ENCODE measurements at regions of chr14 and their contacts with region 1.

Region 1: GRCh38 chr14:60331201-60332045 is 82.4 kb downstream of the PPM1A start:
- DNase-seq: peak; percentile 92
- H3K4me3 Mint-ChIP-seq: peak overlapping the region; percentile 97
- H3K27ac Mint-ChIP-seq: peak overlapping the region; percentile 95
- H3K4me1 Mint-ChIP-seq: peaks cover 32% of the 10 kb centered on the region
- H3K27me3 Mint-ChIP-seq: peaks cover 42% of the 10 kb centered on the region

Region 2: DNA sequence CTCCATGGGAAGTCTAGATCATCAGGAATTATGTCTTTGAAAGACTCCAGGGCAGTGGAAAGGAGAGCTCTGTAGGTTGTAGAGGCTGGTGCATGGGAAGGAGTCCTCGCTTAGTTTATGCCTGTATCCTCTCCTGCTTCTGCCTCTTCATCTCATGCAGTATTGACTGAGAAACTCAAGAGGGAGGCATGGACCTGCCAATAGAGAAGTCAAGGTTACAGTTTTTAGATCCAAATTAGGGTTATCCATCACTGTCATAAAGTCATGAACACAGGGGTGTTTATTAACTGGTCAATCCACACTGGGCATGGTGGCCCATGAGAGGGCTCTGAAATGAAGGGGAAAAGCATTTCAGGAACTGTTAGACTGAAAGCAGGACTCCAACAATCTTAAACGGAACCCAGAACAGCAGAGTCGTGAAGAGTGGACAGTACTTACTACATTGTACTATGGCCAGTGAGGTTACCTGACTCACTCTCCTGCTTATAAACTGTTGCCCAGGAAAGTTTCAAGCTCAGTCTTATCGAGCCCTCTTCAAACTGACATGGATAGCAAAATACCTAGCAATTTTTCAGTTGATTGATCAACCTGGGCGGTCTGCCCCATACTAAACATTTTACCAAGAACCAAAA is 136.1 kb before region 1 on chr14:
- intact Hi-C with region 1: loop called (anchors 10 kb)
- DNase-seq: no peak
- H3K4me3 Mint-ChIP-seq: no peak overlapping the region
- H3K27ac Mint-ChIP-seq: no peak overlapping the region
- H3K4me1 Mint-ChIP-seq: peaks cover 6% of the 10 kb centered on the region
- H3K27me3 Mint-ChIP-seq: peaks cover 9% of the 10 kb centered on the region

Region 3: GRCh38 chr14:60311417-60311816 is 20.0 kb before region 1 on chr14:
- intact Hi-C with region 1: no loop called
- DNase-seq: no peak
- H3K4me3 Mint-ChIP-seq: no peak overlapping the region
- H3K27ac Mint-ChIP-seq: no peak overlapping the region
- H3K4me1 Mint-ChIP-seq: no peaks in the 10 kb centered on the region
- H3K27me3 Mint-ChIP-seq: peaks cover 21% of the 10 kb centered on the region

Region 4: DNA sequence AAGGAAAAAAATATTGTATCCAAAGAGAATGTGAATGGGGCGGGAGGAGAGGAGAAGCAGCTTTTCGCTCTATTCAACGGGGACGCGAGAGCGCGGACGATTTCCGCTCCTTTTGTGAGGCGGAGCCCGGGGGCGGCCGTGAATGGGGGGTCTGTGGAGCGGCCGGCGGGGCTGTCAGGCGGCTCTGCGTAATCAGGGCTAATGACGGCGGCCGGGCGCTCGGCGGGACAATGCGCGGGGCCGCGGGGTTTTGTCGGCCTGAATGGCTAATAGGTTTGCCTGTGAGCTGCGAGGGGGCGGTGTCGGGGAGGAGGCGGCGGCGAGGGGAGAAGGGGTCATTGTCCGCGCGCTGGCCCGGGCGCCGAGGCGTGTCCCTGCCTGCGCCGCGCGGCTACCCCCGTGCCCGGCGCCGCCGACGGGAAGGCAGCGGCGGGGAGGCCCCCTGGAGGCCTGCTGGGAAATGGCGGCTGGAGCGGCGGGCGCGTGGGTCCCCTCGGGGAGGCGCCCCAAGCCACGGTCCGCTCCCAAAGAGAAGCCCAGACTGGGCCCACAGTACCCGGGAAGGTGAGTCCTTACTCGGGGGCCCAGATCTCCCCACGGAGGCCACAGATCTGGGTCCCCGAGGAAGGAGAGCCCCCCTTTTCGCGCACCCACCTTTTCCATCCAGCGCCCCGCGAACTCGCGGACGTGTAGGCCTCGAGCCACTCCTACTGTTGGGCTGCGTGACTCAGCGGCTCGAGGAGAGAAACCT is 183.5 kb after region 1 on chr14:
- intact Hi-C with region 1: no loop called
- DNase-seq: peak; percentile 68
- H3K4me3 Mint-ChIP-seq: peak overlapping the region; percentile 52
- H3K27ac Mint-ChIP-seq: no peak overlapping the region
- H3K4me1 Mint-ChIP-seq: no peaks in the 10 kb centered on the region
- H3K27me3 Mint-ChIP-seq: peaks cover 58% of the 10 kb centered on the region

Region 5: DNA sequence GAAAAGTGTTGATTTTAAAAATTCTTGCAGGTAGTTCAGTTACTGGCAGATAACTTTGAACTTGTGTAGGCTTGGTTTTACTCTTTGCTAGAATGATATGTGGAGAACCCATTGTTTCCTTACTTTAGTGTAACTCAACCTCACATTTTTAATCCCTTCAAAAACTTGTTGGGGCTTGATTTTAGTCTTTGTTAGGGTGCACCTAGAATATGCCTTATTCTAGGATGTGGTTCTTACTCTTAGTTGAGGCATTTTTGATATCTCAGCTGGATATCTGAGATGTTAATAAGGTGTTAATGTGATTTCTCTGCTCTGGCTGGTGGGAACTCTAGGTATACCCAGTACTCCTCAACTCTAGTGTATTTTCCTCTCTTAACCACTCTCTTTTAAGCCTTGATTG is 413.1 kb after region 1 on chr14:
- intact Hi-C with region 1: no loop called
- DNase-seq: no peak
- H3K4me3 Mint-ChIP-seq: no peak overlapping the region
- H3K27ac Mint-ChIP-seq: no peak overlapping the region
- H3K4me1 Mint-ChIP-seq: no peaks in the 10 kb centered on the region
- H3K27me3 Mint-ChIP-seq: no peaks in the 10 kb centered on the region